AG04449 (cell line): ENCODE measurements at regions of chr21 and their contacts with region 1.

Region 1: DNA sequence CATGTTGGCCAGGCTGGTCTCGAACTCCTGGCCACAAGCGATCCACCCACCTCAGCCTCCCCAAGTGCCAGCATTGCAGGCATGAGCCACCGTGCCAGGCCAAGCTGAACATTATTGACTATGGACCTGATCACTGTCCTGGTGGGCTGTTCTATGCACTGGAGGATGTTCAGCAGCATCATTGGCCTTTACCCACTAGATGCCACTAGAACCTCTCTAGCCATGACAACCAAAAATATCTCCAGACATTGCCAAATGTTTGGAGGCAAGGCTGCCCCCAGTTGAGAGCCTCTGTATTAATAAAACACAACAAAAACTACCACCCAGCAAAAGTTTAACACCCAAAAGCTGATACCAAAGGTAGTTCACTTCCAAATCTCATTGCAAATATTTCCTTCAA is 110.8 kb upstream of the SOD1 start:
- DNase-seq: no peak
- H3K4me3 ChIP-seq: no peak overlapping the region
- CTCF ChIP-seq: no peak

Region 2: GRCh38 chr21:31558962-31559367 is 10.3 kb after region 1 on chr21:
- CTCF ChIA-PET with region 1: interaction called, 14 read pairs
- POLR2A ChIA-PET with region 1: no interaction called
- DNase-seq: peak; percentile 56
- H3K4me3 ChIP-seq: peak overlapping the region; percentile 70
- CTCF ChIP-seq: peak; percentile 37

Region 3: GRCh38 chr21:31945546-31945945 is 396.9 kb after region 1 on chr21:
- CTCF ChIA-PET with region 1: no interaction called
- POLR2A ChIA-PET with region 1: no interaction called
- DNase-seq: peak; percentile 60
- H3K4me3 ChIP-seq: no peak overlapping the region
- CTCF ChIP-seq: no peak